Aorta (tissue), 5 donors: ENCODE measurements at regions of chr12 and their contacts with region 1.

Region 1: GRCh38 chr12:2812290-2813213 is at the start of gene ITFG2:
- DNase-seq: peak; percentile 99
- ATAC-seq: peak; percentile 98
- H3K4me3 ChIP-seq: peak within 1 kb of the TSS; percentile 60 to 71
- H3K27ac ChIP-seq: peak within 1 kb of the TSS in 1 of 2 donors; percentile 93
- H3K4me1 ChIP-seq: peaks cover 0 to 2% of the 10 kb centered on the region in 2 donors
- H3K27me3 ChIP-seq: no peaks in the 10 kb centered on the region
- total RNA-seq, gene ITFG2: 23.9 to 43.7 TPM

Region 2: GRCh38 chr12:2414810-2415567 is 397.6 kb before region 1 on chr12:
- intact Hi-C with region 1: no loop called
- DNase-seq: peak; percentile 71 to 83
- ATAC-seq: peak; percentile 67
- H3K4me3 ChIP-seq: no peak overlapping the region
- H3K27ac ChIP-seq: peak overlapping the region in 1 of 2 donors; percentile 43
- H3K4me1 ChIP-seq: no peaks in the 10 kb centered on the region
- H3K27me3 ChIP-seq: no peaks in the 10 kb centered on the region

Region 3: DNA sequence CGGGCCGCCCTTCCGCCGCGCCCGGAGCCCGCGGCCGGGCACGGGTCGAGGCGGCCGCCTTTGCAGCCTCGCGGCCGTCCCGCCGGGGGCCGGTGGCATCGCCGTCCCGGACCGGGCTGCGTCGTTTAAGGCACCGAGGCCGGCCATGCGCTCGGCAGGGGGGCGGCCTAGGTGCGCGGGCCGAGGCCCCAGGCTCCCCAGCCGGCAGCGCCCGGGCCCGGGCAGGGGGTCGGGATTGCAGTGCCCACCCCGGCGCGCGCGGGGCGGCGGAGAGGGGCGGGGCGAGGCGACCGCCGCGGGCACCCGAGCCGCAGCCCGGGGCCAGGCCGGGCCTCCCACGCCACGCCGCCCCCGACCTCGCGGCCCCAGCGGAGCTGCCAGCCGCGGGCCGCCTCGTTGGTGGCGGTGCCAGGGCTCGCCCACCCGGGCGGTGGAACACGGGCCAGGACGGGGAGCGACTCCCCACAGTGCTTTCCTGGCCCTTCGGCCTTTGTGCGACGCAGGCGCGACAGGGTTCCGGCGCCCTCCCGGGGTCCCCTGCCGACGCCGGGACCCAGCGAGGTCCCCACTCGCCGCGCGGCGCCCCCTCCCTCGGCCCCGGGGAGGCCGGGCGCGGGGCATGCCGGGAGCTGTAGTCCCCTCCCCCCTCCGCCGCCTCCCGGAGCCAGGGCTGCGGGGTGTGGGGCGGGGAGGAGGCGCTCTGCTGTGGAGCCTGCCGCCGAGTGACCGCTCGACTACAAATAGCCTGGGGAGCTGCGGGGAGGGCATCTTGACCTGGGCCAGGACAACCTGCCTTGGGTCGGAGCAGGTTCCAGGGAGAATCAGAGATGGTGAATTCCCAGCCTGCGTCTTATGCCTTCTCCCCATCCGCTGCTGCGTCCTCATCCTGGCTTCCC is 17.0 kb before region 1 on chr12:
- intact Hi-C with region 1: loop called in 1 of 2 experiments (anchors 2 kb)
- DNase-seq: peak; percentile 87 to 93
- ATAC-seq: peak; percentile 86
- H3K4me3 ChIP-seq: peak overlapping the region; percentile 58 to 94
- H3K27ac ChIP-seq: peak overlapping the region in 1 of 2 donors; percentile 64
- H3K4me1 ChIP-seq: peaks cover 0 to 3% of the 10 kb centered on the region in 2 donors
- H3K27me3 ChIP-seq: no peaks in the 10 kb centered on the region

Region 4: GRCh38 chr12:2890388-2891239 is 78.1 kb after region 1 on chr12 and contains the start of gene TULP3:
- intact Hi-C with region 1: loop called in 1 of 2 experiments (anchors 5 kb)
- DNase-seq: peak; percentile 99 to 100
- ATAC-seq: peak; percentile 98
- H3K4me3 ChIP-seq: peak within 1 kb of the TSS; percentile 63 to 65
- H3K27ac ChIP-seq: peak within 1 kb of the TSS; percentile 73 to 87
- H3K4me1 ChIP-seq: no peaks in the 10 kb centered on the region
- H3K27me3 ChIP-seq: no peaks in the 10 kb centered on the region
- total RNA-seq, gene TULP3: 22.4 to 35.0 TPM

Region 5: DNA sequence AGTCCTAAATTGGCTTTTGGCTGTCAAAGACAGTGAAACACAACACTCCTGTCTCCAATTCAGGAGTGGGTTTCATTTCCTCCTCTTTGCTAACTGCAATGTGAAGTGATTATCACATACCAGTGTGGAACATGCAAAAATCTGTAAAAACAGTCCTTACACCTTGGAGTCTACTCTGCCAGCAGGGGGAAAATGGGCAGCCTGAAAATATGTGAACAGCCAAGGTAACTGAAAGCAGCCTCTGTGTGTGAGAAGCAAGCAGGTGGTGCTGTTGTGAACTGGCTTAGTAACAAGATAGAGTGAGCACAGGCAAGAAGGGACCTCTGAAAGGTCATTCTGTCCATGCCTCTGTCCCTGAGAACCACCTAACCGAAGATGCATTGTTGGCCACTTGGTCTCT is 684.4 kb after region 1 on chr12:
- intact Hi-C with region 1: no loop called
- DNase-seq: no peak
- ATAC-seq: no peak
- H3K4me3 ChIP-seq: no peak overlapping the region
- H3K27ac ChIP-seq: no peak overlapping the region
- H3K4me1 ChIP-seq: no peaks in the 10 kb centered on the region
- H3K27me3 ChIP-seq: no peaks in the 10 kb centered on the region